PC-9 (cell line): ENCODE measurements at regions of chr10 and their contacts with region 1.

Region 1: DNA sequence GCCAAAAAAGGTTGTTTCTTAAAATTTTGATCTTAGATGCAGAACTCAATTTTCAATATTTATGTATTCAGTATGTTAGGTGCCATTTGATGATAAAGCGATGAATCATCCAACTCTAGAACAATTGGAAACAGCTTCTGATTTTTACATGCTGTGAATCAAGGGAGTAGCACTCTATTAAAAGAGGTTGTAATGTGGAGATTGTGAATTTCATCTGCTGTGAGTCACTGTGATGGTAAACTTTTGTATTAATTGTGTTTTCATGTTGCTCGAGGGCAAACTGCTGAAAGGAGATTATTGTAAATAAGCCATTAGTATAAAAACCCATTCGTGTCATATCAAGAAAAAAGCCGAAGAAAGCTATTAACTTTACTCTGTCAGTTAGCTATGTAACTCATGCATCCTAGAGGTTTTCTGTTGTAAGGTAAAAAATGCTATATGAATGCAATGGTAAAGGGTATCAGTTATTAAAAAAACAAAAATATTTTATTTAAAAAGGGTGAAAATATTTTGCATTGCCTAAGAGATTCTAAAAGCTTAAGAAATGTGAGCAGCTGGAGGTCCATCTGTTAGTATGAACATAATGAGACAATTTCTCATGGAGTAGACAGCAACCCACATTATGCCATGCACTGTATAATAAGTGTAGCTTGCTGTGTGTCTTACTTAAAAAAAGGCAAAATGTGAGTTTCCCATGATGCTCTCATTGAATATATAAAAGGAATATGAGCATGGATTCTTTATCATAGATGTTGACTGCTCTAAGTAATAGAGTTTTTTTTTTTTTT is 511.0 kb upstream of the PCDH15 start:
- DNase-seq: peak in 1 of 2 experiments; percentile 51
- H3K4me3 ChIP-seq: no peak overlapping the region
- H3K27ac ChIP-seq: no peak overlapping the region
- H3K4me1 ChIP-seq: no peaks in the 10 kb centered on the region
- H3K27me3 ChIP-seq: no peaks in the 10 kb centered on the region
- CTCF ChIP-seq: no peak

Region 2: DNA sequence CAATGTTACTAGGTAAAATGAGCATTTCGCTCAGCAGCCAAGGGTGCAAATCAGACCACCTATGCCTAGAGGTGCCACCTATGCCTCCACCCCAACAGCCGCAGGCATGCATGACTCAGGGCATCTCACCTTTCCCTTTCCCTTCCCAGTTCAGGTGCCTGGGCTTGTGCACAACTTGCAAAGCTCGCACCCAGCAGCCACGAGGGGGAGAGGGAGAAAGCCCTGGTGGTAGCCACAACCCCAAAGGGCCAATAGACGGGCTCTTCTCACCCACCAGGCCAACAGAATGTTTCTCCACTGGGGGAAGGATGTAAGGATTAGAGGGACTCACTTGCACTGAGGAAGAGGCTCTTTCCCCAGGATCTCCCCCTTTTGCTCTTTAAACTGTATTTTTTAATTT is 48.7 kb before region 1 on chr10:
- CTCF ChIA-PET with region 1: no interaction called
- POLR2A ChIA-PET with region 1: no interaction called
- intact Hi-C with region 1: no loop called
- DNase-seq: no peak
- H3K4me3 ChIP-seq: no peak overlapping the region
- H3K27ac ChIP-seq: no peak overlapping the region
- H3K4me1 ChIP-seq: no peaks in the 10 kb centered on the region
- H3K27me3 ChIP-seq: no peaks in the 10 kb centered on the region
- CTCF ChIP-seq: no peak

Region 3: DNA sequence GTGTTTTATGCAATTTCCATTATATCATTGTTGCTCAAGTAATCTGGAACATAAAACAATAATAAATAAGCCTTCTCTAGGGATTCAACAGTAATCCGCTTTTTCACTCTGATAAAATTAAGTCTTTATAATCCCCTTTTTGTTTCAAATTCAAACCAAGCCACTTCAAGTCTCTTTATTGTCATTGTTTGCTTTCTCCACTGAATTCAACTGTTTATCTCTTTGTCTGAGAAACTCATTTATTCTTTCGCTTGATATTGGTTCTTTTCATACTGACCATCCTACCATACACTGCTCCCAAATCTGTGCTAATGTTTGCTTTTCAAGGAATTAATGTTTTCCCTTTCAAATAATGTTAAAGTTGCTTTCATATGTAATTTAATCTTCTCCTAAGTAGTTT is 39.4 kb after region 1 on chr10:
- CTCF ChIA-PET with region 1: no interaction called
- POLR2A ChIA-PET with region 1: interaction called, 11 read pairs
- intact Hi-C with region 1: no loop called
- DNase-seq: no peak
- H3K4me3 ChIP-seq: no peak overlapping the region
- H3K27ac ChIP-seq: no peak overlapping the region
- H3K4me1 ChIP-seq: no peaks in the 10 kb centered on the region
- H3K27me3 ChIP-seq: no peaks in the 10 kb centered on the region
- CTCF ChIP-seq: no peak